PC-3 (cell line): ENCODE measurements at regions of chr21 and their contacts with region 1.

Region 1: GRCh38 chr21:31659536-31660258 is at the start of gene SOD1:
- DNase-seq: peak; percentile 95
- ATAC-seq: peak; percentile 91
- H3K4me3 ChIP-seq: peak within 1 kb of the TSS; percentile 86
- H3K27ac ChIP-seq: peak within 1 kb of the TSS; percentile 53
- H3K4me1 ChIP-seq: peaks cover 38% of the 10 kb centered on the region
- H3K27me3 ChIP-seq: no peaks in the 10 kb centered on the region
- CTCF ChIP-seq: no peak
- total RNA-seq, gene SOD1: 398 and 409 TPM in 2 replicates

Region 2: DNA sequence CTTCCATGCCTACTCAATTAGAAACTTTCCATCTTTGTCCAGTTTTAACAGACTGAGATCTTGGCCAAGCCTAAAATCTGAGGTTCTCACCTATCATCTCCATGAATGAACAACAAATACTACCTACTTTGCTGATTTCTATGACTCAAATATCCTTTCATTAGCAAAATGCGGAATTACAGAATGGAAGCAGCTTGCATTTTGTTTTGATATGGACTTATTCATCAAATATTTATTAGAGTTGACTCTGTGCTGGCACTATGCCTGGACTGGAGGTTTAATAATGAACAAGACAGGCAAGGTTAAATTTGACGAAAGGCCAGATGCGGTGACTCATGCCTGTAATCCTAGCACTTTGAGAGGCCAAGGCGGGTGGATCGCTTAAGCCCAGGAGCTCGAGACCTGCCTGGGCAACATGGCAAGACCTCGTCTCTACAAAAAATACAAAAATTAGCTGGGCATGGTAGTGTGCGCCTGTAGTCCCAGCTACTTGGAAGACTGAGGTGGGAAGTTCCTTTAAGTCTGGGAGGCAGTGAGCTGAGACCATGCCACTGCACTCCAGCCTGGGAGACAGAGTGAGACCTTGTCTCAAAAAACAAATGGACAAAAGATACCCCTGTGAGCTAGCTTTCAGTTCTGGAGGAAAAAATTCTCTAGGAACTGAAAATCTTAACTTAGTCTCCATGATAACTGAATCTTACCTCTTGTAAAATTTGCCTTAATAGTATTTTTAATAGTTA is 29.6 kb before region 1 on chr21:
- CTCF ChIA-PET with region 1: no interaction called
- POLR2A ChIA-PET with region 1: no interaction called
- intact Hi-C with region 1: loop called (anchors 1 kb)
- DNase-seq: peak; percentile 99
- ATAC-seq: peak; percentile 97
- H3K4me3 ChIP-seq: no peak overlapping the region
- H3K27ac ChIP-seq: peak overlapping the region; percentile 46
- H3K4me1 ChIP-seq: peaks cover 15% of the 10 kb centered on the region
- H3K27me3 ChIP-seq: no peaks in the 10 kb centered on the region
- CTCF ChIP-seq: no peak

Region 3: DNA sequence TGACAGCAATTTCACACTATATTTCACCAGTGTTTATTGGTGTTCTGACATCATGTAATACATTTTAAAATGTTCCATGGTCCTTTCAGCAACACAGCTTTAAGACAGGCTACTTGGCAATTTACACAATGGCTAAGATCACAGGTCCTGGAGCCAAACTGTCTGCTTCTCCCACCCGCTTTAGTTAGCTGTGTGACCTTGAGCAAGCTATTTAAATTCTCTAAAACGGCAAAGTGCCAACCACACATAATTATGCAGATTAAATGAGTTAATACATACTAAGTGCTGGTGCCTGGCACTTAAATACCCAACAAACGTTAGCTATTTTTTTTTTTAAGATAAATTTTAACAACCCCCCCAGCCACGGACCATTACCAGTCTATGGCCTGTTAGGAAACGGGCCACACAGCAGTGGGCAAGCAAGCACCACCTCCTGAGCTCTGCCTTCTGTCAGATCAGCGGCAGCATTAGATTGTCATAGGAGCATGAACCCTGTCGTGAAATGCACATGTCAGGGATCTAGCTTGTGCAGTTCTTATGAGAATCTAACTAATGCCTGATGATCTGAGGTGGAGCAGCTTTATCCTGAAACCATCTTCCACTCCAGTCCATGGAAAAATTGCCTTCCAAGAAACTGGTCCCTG is 26.7 kb after region 1 on chr21:
- CTCF ChIA-PET with region 1: interaction called, 12 read pairs
- POLR2A ChIA-PET with region 1: no interaction called
- intact Hi-C with region 1: no loop called
- DNase-seq: no peak
- ATAC-seq: no peak
- H3K4me3 ChIP-seq: no peak overlapping the region
- H3K27ac ChIP-seq: no peak overlapping the region
- H3K4me1 ChIP-seq: no peaks in the 10 kb centered on the region
- H3K27me3 ChIP-seq: no peaks in the 10 kb centered on the region
- CTCF ChIP-seq: no peak